GM12878 (cell line): ENCODE measurements at regions of chr10 and their contacts with region 1.

Region 1: DNA sequence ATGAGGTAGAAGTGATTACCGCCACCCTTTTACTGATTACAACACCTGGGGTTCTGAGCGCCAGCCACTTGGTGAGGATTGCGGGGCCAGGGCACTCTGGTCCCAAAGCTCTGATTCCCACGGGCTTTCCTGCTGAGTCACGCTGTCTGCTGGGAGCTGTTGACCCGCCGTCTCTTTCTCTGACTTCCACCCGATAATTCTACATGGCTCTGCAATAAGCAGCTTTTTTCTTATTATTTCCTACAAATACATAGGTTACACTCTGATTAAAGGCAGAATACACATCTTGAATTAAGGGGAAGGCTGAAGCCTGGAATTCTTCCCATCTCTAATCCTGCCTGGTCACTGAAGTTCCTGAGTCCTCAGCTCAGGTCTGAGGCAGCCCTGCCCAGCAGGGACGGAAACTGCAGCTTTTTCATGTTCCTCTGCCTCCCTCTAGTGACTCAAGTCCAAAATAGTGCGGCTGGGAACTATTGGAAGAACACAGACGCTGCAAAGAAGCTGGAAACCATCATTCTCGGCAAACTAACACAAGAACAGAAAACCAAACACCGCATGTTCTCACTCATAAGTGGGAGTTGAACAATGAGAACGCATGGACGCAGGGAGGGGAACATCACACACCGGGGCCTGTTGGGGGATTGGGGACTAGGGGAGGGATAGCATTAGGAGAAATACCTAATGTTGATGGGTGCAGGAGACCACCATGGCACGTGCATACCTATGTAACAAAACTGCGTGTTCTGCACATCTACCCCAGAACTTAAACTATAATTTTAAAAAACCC is 178.3 kb downstream of the PRKCQ start:
- DNase-seq: peak; percentile 37
- ATAC-seq: peak; percentile 92
- H3K4me3 ChIP-seq: no peak overlapping the region
- H3K27ac ChIP-seq: no peak overlapping the region
- H3K4me1 ChIP-seq: no peaks in the 10 kb centered on the region
- H3K27me3 ChIP-seq: peaks cover 0 to 5% of the 10 kb centered on the region in 2 experiments; a peak in 3 of 4 replicates
- CTCF ChIP-seq: peak; percentile 69 to 88 (median 77)
- EP300 ChIP-seq: no peak
- POLR2A ChIP-seq: no peak
- RAD21 ChIP-seq: peak; percentile 98

Region 2: GRCh38 chr10:5283305-5284158 is 1118.2 kb before region 1 on chr10:
- CTCF ChIA-PET with region 1: no interaction called
- POLR2A ChIA-PET with region 1: no interaction called
- RAD21 ChIA-PET with region 1: no interaction called
- SMC1A ChIA-PET with region 1: no interaction called
- in situ Hi-C with region 1: no loop called
- intact Hi-C with region 1: no loop called
- DNase-seq: no peak
- ATAC-seq: peak; percentile 95
- H3K4me3 ChIP-seq: no peak overlapping the region
- H3K27ac ChIP-seq: no peak overlapping the region
- H3K4me1 ChIP-seq: no peaks in the 10 kb centered on the region
- H3K27me3 ChIP-seq: no peaks in the 10 kb centered on the region
- CTCF ChIP-seq: peak; percentile 62 to 66 (median 65); a peak in 5 of 6 replicates
- EP300 ChIP-seq: no peak
- POLR2A ChIP-seq: no peak
- RAD21 ChIP-seq: peak; percentile 58

Region 3: GRCh38 chr10:6014241-6014761 is 387.5 kb before region 1 on chr10:
- CTCF ChIA-PET with region 1: interaction called, 23 read pairs
- POLR2A ChIA-PET with region 1: no interaction called
- RAD21 ChIA-PET with region 1: interaction called, 10 read pairs
- SMC1A ChIA-PET with region 1: interaction called, 11 read pairs
- in situ Hi-C with region 1: loop called (anchors 10 kb)
- intact Hi-C with region 1: loop called (anchors 2 kb)
- DNase-seq: peak; percentile 30
- ATAC-seq: peak; percentile 91
- H3K4me3 ChIP-seq: no peak overlapping the region
- H3K27ac ChIP-seq: no peak overlapping the region
- H3K4me1 ChIP-seq: no peaks in the 10 kb centered on the region
- H3K27me3 ChIP-seq: no peaks in the 10 kb centered on the region; a peak in 1 of 4 replicates
- CTCF ChIP-seq: peak; percentile 68 to 82 (median 77)
- EP300 ChIP-seq: no peak
- POLR2A ChIP-seq: no peak
- RAD21 ChIP-seq: peak; percentile 89

Region 4: DNA sequence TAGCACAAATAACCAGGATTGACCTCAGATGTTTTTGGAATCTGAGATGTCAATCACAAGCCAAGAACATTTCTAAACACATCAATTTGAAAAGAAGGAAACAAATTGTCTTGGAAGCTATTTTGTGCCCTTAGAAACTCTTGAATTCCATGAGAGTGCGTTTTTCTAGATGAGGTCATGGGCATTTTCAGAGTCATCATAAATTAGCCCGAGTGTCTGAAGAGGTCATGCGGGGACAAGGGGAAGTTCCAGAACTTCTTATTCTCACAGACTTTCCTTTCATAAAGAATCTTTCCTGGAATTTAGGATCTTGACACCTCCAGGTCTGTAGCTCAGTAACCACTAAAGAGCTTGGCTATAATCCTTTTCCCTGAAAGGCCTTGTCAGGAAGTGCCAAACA is 367.8 kb before region 1 on chr10:
- CTCF ChIA-PET with region 1: no interaction called
- POLR2A ChIA-PET with region 1: no interaction called
- RAD21 ChIA-PET with region 1: no interaction called
- SMC1A ChIA-PET with region 1: no interaction called
- in situ Hi-C with region 1: no loop called
- intact Hi-C with region 1: no loop called
- DNase-seq: no peak
- ATAC-seq: no peak
- H3K4me3 ChIP-seq: no peak overlapping the region
- H3K27ac ChIP-seq: no peak overlapping the region
- H3K4me1 ChIP-seq: peaks cover 12% of the 10 kb centered on the region; the same call in 1 of the 2 replicates
- H3K27me3 ChIP-seq: no peaks in the 10 kb centered on the region
- CTCF ChIP-seq: no peak
- EP300 ChIP-seq: no peak
- POLR2A ChIP-seq: no peak
- RAD21 ChIP-seq: no peak

Region 5: GRCh38 chr10:6136215-6137201 is 265.2 kb before region 1 on chr10:
- CTCF ChIA-PET with region 1: interaction called, 18 read pairs
- POLR2A ChIA-PET with region 1: interaction called, 3 read pairs
- RAD21 ChIA-PET with region 1: interaction called, 9 read pairs
- SMC1A ChIA-PET with region 1: interaction called, 18 read pairs
- in situ Hi-C with region 1: no loop called
- intact Hi-C with region 1: no loop called
- DNase-seq: peak; percentile 66
- ATAC-seq: peak; percentile 71
- H3K4me3 ChIP-seq: peak overlapping the region; percentile 54
- H3K27ac ChIP-seq: peak overlapping the region; percentile 63
- H3K4me1 ChIP-seq: peaks cover 38% of the 10 kb centered on the region
- H3K27me3 ChIP-seq: no peaks in the 10 kb centered on the region
- CTCF ChIP-seq: 0 out of 6 replicates have a peak, but pooled peaks of 1 of the 3 experiments have one; percentile 1
- EP300 ChIP-seq: peak in 1 of 2 experiments; percentile 74; a peak in 2 of 4 replicates
- POLR2A ChIP-seq: no peak
- RAD21 ChIP-seq: no peak

Region 6: GRCh38 chr10:6211671-6212635 is 189.8 kb before region 1 on chr10:
- CTCF ChIA-PET with region 1: interaction called, 20 read pairs
- POLR2A ChIA-PET with region 1: no interaction called
- RAD21 ChIA-PET with region 1: interaction called, 18 read pairs
- SMC1A ChIA-PET with region 1: interaction called, 28 read pairs
- in situ Hi-C with region 1: no loop called
- intact Hi-C with region 1: no loop called
- DNase-seq: no peak
- ATAC-seq: no peak
- H3K4me3 ChIP-seq: no peak overlapping the region
- H3K27ac ChIP-seq: no peak overlapping the region
- H3K4me1 ChIP-seq: no peaks in the 10 kb centered on the region
- H3K27me3 ChIP-seq: no peaks in the 10 kb centered on the region
- CTCF ChIP-seq: no peak
- EP300 ChIP-seq: no peak
- POLR2A ChIP-seq: no peak
- RAD21 ChIP-seq: no peak

Region 7: GRCh38 chr10:6300106-6300783 is 101.5 kb before region 1 on chr10:
- CTCF ChIA-PET with region 1: interaction called, 20 read pairs
- POLR2A ChIA-PET with region 1: interaction called, 4 read pairs
- RAD21 ChIA-PET with region 1: interaction called, 27 read pairs
- SMC1A ChIA-PET with region 1: interaction called, 42 read pairs
- in situ Hi-C with region 1: no loop called
- intact Hi-C with region 1: loop called (anchors 2 kb)
- DNase-seq: peak; percentile 97
- ATAC-seq: peak; percentile 82
- H3K4me3 ChIP-seq: peak overlapping the region; percentile 34; the same call in 1 of the 2 replicates
- H3K27ac ChIP-seq: peak overlapping the region; percentile 70
- H3K4me1 ChIP-seq: peaks cover 31% of the 10 kb centered on the region
- H3K27me3 ChIP-seq: no peaks in the 10 kb centered on the region
- CTCF ChIP-seq: no peak
- EP300 ChIP-seq: peak; percentile 99 to 100
- POLR2A ChIP-seq: 0 out of 2 replicates have a peak, but pooled peaks have one; percentile 31
- RAD21 ChIP-seq: no peak; the same call in 1 of the 2 replicates

Region 8: DNA sequence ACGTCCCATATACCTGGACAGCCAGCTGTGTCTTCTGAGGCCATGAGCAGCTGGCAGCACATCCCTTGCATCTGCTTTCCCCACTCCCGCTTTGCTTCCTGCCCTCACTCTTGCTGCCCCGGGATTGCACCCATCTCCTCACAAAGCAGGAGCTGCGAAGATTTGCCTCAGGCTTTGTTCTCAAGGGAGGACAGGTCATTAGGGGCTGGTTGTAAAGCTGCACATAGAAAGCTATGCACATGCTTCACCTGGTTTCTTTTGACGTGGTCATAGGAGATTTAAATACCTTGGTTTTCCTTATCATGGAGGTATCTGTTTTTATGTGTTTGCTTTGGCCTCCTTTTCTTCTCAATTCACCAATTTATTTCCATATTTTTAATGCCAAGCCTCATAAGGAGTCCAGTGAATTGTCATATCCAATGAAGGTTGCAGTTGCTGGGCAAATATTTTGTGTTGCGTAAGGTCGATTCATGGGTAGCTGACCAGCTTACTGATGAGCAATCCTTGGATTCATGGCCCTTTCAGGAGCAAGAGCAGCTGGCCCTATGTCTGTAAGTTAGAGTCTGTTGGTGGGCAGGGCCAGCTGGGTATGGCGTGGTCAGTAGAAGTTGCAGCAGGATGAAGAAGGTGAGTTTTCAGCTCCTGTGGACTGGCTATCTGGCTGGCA is 16.2 kb before region 1 on chr10:
- CTCF ChIA-PET with region 1: interaction called, 12 read pairs
- POLR2A ChIA-PET with region 1: no interaction called
- RAD21 ChIA-PET with region 1: interaction called, 4 read pairs
- SMC1A ChIA-PET with region 1: interaction called, 14 read pairs
- in situ Hi-C with region 1: no loop called
- intact Hi-C with region 1: no loop called
- DNase-seq: no peak
- ATAC-seq: no peak
- H3K4me3 ChIP-seq: no peak overlapping the region
- H3K27ac ChIP-seq: no peak overlapping the region
- H3K4me1 ChIP-seq: no peaks in the 10 kb centered on the region
- H3K27me3 ChIP-seq: peaks cover 0 to 3% of the 10 kb centered on the region in 2 experiments; a peak in 1 of 4 replicates
- CTCF ChIP-seq: no peak
- EP300 ChIP-seq: no peak
- POLR2A ChIP-seq: no peak
- RAD21 ChIP-seq: no peak

Region 9: GRCh38 chr10:6678211-6678803 is 276.6 kb after region 1 on chr10:
- CTCF ChIA-PET with region 1: interaction called, 17 read pairs
- POLR2A ChIA-PET with region 1: no interaction called
- RAD21 ChIA-PET with region 1: interaction called, 7 read pairs
- SMC1A ChIA-PET with region 1: interaction called, 12 read pairs
- in situ Hi-C with region 1: no loop called
- intact Hi-C with region 1: no loop called
- DNase-seq: no peak
- ATAC-seq: peak; percentile 77
- H3K4me3 ChIP-seq: no peak overlapping the region
- H3K27ac ChIP-seq: no peak overlapping the region
- H3K4me1 ChIP-seq: no peaks in the 10 kb centered on the region
- H3K27me3 ChIP-seq: no peaks in the 10 kb centered on the region
- CTCF ChIP-seq: peak; percentile 73 to 75 (median 75)
- EP300 ChIP-seq: no peak
- POLR2A ChIP-seq: no peak
- RAD21 ChIP-seq: peak; percentile 72